IMR-90 (cell line): ENCODE measurements at regions of chr11 and their contacts with region 1.

Region 1: GRCh38 chr11:46006418-46007070 is 84.1 kb downstream of the LARGE2 start:
- DNase-seq: peak; percentile 84
- ATAC-seq: peak; percentile 84
- H3K4me3 ChIP-seq: no peak overlapping the region
- H3K27ac ChIP-seq: no peak overlapping the region
- H3K4me1 ChIP-seq: peaks cover 5% of the 10 kb centered on the region; the same call in 1 of the 2 replicates
- H3K27me3 ChIP-seq: no peaks in the 10 kb centered on the region
- CTCF ChIP-seq: peak; percentile 87
- POLR2A ChIP-seq: no peak
- RAD21 ChIP-seq: peak; percentile 87

Region 2: DNA sequence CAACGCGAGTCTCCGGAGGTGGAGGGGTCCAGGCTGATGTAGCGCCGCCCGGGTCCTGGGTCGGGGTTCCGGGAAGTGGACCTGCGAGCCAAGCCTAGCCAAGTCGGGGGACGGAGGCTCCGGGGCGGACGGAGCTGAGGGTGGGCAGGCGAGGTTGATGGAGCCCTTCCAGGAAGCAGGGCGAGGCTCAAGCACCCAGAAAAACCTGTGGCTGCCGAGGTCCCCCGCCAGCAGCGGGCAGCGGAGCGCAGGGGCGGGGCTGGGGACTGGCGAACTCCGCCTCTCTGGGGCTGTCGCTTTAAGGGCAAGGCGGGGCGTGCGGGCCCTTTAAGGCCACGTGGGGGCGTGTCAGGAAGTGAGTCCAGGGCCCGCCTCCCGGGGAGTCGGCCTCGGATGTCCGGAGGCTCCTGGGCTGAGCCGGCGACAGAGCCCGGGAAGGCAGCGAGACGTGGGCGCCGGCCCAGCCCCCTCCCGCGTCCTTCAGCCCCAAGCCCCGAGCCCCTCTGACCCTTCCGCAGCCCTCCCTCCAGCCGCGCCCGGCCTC is 201.7 kb before region 1 on chr11 and contains the start of gene SLC35C1:
- CTCF ChIA-PET with region 1: no interaction called
- POLR2A ChIA-PET with region 1: no interaction called
- dilution Hi-C with region 1: no loop called
- in situ Hi-C with region 1: no loop called
- intact Hi-C with region 1: no loop called
- DNase-seq: peak; percentile 90
- ATAC-seq: peak; percentile 93
- H3K4me3 ChIP-seq: peak within 1 kb of the TSS; percentile 87
- H3K27ac ChIP-seq: peak within 1 kb of the TSS; percentile 91
- H3K4me1 ChIP-seq: peaks cover 20% of the 10 kb centered on the region
- H3K27me3 ChIP-seq: no peaks in the 10 kb centered on the region; the same call in 1 of the 2 replicates
- CTCF ChIP-seq: peak; percentile 14; the same call in 1 of the 2 replicates
- POLR2A ChIP-seq: peak; percentile 91
- RAD21 ChIP-seq: no peak
- total RNA-seq, gene SLC35C1: 3.1 and 4.3 TPM in 2 replicates

Region 3: DNA sequence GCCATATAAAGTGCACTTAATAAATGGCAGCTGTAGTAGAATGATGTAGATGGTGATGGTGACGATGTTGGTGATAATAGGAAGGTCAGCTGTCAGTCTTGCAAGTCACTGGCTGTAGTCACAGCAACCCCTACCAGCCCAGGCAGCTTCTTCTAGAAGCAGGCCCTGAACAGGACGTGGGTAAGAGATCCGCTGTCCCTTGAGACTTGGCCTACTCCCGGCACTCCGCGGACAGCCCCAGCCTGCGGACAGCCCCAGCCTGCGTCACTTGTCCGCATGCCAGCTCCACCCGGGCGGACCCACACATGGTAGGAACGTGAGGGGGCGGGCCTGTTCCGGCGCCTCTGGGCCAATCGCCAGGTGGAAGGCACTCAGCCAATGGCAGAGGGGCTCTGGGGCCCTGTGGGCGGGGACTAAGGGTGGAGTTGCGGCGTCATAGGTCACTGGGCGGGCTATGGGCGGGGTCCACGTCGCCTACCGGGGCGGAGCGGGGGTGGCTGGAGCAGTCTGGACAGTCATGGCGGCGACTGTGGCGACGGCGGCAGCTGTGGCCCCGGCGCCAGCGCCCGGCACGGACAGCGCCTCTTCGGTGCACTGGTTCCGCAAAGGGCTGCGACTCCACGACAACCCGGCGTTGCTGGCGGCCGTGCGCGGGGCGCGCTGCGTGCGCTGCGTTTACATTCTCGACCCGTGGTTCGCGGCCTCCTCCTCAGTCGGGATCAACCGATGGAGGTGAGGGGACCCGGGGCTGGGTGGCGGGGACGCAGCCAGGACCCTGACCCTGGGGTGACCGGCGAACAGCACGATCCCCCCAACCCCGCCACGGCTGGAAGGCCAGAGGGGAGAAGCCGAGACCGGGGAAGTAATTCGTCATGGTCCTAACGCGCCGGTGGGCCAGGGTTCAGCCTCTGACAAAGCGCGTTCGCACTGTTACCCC is 159.3 kb before region 1 on chr11 and contains the start of gene CRY2:
- CTCF ChIA-PET with region 1: interaction called, 3 read pairs
- POLR2A ChIA-PET with region 1: no interaction called
- dilution Hi-C with region 1: no loop called
- in situ Hi-C with region 1: no loop called
- intact Hi-C with region 1: loop called (anchors 10 kb)
- DNase-seq: peak; percentile 96
- ATAC-seq: peak; percentile 97
- H3K4me3 ChIP-seq: peak within 1 kb of the TSS; percentile 97
- H3K27ac ChIP-seq: peak within 1 kb of the TSS; percentile 90
- H3K4me1 ChIP-seq: peaks cover 8% of the 10 kb centered on the region
- H3K27me3 ChIP-seq: no peaks in the 10 kb centered on the region
- CTCF ChIP-seq: no peak
- POLR2A ChIP-seq: peak; percentile 97
- RAD21 ChIP-seq: peak; percentile 15; the same call in 1 of the 2 replicates
- total RNA-seq, gene CRY2: 12.8 and 13.1 TPM in 2 replicates

Region 4: GRCh38 chr11:45872513-45873356 is 133.8 kb before region 1 on chr11:
- CTCF ChIA-PET with region 1: interaction called, 3 read pairs
- POLR2A ChIA-PET with region 1: no interaction called
- dilution Hi-C with region 1: no loop called
- in situ Hi-C with region 1: loop called (anchors 10 kb)
- intact Hi-C with region 1: loop called (anchors 10 kb)
- DNase-seq: peak; percentile 95
- ATAC-seq: peak; percentile 98
- H3K4me3 ChIP-seq: no peak overlapping the region
- H3K27ac ChIP-seq: no peak overlapping the region
- H3K4me1 ChIP-seq: peaks cover 5% of the 10 kb centered on the region
- H3K27me3 ChIP-seq: no peaks in the 10 kb centered on the region
- CTCF ChIP-seq: peak; percentile 81
- POLR2A ChIP-seq: no peak
- RAD21 ChIP-seq: peak; percentile 82

Region 5: GRCh38 chr11:45964911-45965389 is 41.6 kb before region 1 on chr11:
- CTCF ChIA-PET with region 1: interaction called, 23 read pairs
- POLR2A ChIA-PET with region 1: no interaction called
- dilution Hi-C with region 1: no loop called
- in situ Hi-C with region 1: loop called (anchors 5 kb)
- intact Hi-C with region 1: loop called (anchors 1 kb)
- DNase-seq: peak; percentile 80
- ATAC-seq: peak; percentile 99
- H3K4me3 ChIP-seq: no peak overlapping the region
- H3K27ac ChIP-seq: no peak overlapping the region
- H3K4me1 ChIP-seq: peaks cover 2% of the 10 kb centered on the region; the same call in 1 of the 2 replicates
- H3K27me3 ChIP-seq: no peaks in the 10 kb centered on the region
- CTCF ChIP-seq: peak; percentile 90
- POLR2A ChIP-seq: no peak
- RAD21 ChIP-seq: peak; percentile 89

Region 6: GRCh38 chr11:46017341-46017740 is 10.8 kb after region 1 on chr11:
- CTCF ChIA-PET with region 1: interaction called, 10 read pairs
- POLR2A ChIA-PET with region 1: no interaction called
- dilution Hi-C with region 1: no loop called
- in situ Hi-C with region 1: no loop called
- intact Hi-C with region 1: no loop called
- DNase-seq: no peak
- ATAC-seq: no peak
- H3K4me3 ChIP-seq: no peak overlapping the region
- H3K27ac ChIP-seq: no peak overlapping the region
- H3K4me1 ChIP-seq: no peaks in the 10 kb centered on the region
- H3K27me3 ChIP-seq: no peaks in the 10 kb centered on the region
- CTCF ChIP-seq: no peak
- POLR2A ChIP-seq: no peak
- RAD21 ChIP-seq: no peak